Mammary epithelial cell (primary cell): ENCODE measurements at regions of chr3 and their contacts with region 1.

Region 1: GRCh38 chr3:178676942-178677790 is 140.9 kb downstream of the KCNMB2 start:
- DNase-seq: no peak
- H3K4me3 ChIP-seq: no peak overlapping the region
- H3K27ac ChIP-seq: no peak overlapping the region
- H3K4me1 ChIP-seq: peaks cover 4% of the 10 kb centered on the region
- H3K27me3 ChIP-seq: peaks cover 3% of the 10 kb centered on the region
- CTCF ChIP-seq: no peak

Region 2: GRCh38 chr3:178623666-178624255 is 53.4 kb before region 1 on chr3:
- CTCF ChIA-PET with region 1: no interaction called
- dilution Hi-C with region 1: loop called (anchors 5 kb)
- in situ Hi-C with region 1: no loop called
- intact Hi-C with region 1: no loop called
- DNase-seq: no peak
- H3K4me3 ChIP-seq: no peak overlapping the region
- H3K27ac ChIP-seq: no peak overlapping the region
- H3K4me1 ChIP-seq: no peaks in the 10 kb centered on the region
- H3K27me3 ChIP-seq: no peaks in the 10 kb centered on the region
- CTCF ChIP-seq: no peak

Region 3: DNA sequence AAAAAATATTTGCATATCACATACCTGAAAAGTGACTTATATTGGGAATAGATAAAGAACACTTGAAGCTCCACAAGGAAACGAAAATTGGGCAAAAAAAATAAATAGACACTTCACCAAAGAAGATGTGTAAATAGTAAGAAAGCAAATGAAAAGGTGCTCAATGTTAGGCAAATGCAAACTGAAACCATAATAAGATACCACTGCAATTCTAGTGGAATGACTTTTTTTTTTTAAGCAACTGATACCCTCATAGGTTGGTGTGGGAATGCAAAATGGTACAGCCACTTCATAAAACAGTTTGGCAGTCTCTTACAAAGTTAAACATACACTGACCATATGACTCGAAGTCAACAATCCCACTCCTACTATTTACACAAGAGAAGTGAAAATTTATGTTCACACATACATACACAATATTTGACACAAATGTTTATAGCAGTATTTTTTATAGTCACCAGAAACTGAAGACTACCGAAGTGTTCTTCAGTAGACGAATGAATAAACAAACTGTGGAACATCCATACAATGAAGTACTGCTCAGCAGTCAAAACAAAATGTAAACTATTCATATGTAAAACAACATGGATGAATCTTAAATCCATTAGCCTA is 218.1 kb after region 1 on chr3:
- CTCF ChIA-PET with region 1: no interaction called
- dilution Hi-C with region 1: no loop called
- in situ Hi-C with region 1: no loop called
- intact Hi-C with region 1: no loop called
- DNase-seq: no peak
- H3K4me3 ChIP-seq: no peak overlapping the region
- H3K27ac ChIP-seq: no peak overlapping the region
- H3K4me1 ChIP-seq: no peaks in the 10 kb centered on the region
- H3K27me3 ChIP-seq: no peaks in the 10 kb centered on the region
- CTCF ChIP-seq: no peak